Activated naive CD4-positive, alpha-beta T cell treated with anti-CD3 and anti-CD28 coated beads for 36 hours (primary cell): ENCODE measurements at regions of chr19 and their contacts with region 1.

Region 1: GRCh38 chr19:34171877-34172660 is at the start of gene LSM14A:
- DNase-seq: peak; percentile 90
- H3K4me3 Mint-ChIP-seq: peak within 1 kb of the TSS; percentile 96
- H3K27ac Mint-ChIP-seq: peak within 1 kb of the TSS; percentile 99
- H3K4me1 Mint-ChIP-seq: peaks cover 38% of the 10 kb centered on the region
- H3K27me3 Mint-ChIP-seq: no peaks in the 10 kb centered on the region
- total RNA-seq, gene LSM14A: 87.9 to 102 TPM

Region 2: GRCh38 chr19:34134190-34135053 is 37.6 kb before region 1 on chr19:
- CTCF ChIA-PET with region 1: interaction called, 4 read pairs
- intact Hi-C with region 1: loop called (anchors 1 kb)
- DNase-seq: peak; percentile 79
- H3K4me3 Mint-ChIP-seq: peak overlapping the region; percentile 94
- H3K27ac Mint-ChIP-seq: peak overlapping the region; percentile 93
- H3K4me1 Mint-ChIP-seq: peaks cover 5% of the 10 kb centered on the region
- H3K27me3 Mint-ChIP-seq: no peaks in the 10 kb centered on the region

Region 3: DNA sequence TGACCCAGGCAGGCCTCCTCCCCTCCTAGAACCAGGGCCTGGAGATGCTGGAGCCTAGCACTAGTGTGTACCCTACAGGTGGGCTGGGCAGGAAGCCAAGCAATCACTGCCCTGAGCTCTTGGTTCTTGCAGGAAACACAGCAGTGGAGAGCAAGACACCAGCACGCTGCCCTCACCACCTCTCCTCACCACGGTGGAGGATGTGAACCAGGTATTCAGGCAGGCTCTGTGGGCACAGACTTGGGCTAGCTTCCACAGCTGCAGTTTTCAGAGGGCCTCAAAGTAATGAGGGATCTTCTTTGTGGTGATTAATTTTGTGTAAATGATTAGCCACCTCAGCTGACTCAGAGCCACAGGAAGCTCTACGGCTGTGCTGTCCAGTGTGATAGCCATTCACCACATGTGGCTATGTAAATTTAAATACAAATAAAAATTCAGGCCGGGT is 179.3 kb after region 1 on chr19:
- CTCF ChIA-PET with region 1: interaction called, 3 read pairs
- intact Hi-C with region 1: loop called (anchors 1 kb)
- DNase-seq: no peak
- H3K4me3 Mint-ChIP-seq: no peak overlapping the region
- H3K27ac Mint-ChIP-seq: peak overlapping the region; percentile 81
- H3K4me1 Mint-ChIP-seq: peaks cover 18% of the 10 kb centered on the region
- H3K27me3 Mint-ChIP-seq: no peaks in the 10 kb centered on the region

Region 4: GRCh38 chr19:34359140-34359953 is 187.3 kb after region 1 on chr19:
- CTCF ChIA-PET with region 1: no interaction called
- intact Hi-C with region 1: loop called (anchors 1 kb)
- DNase-seq: peak; percentile 96
- H3K4me3 Mint-ChIP-seq: peak overlapping the region; percentile 80
- H3K27ac Mint-ChIP-seq: peak overlapping the region; percentile 93
- H3K4me1 Mint-ChIP-seq: peaks cover 35% of the 10 kb centered on the region
- H3K27me3 Mint-ChIP-seq: no peaks in the 10 kb centered on the region

Region 5: DNA sequence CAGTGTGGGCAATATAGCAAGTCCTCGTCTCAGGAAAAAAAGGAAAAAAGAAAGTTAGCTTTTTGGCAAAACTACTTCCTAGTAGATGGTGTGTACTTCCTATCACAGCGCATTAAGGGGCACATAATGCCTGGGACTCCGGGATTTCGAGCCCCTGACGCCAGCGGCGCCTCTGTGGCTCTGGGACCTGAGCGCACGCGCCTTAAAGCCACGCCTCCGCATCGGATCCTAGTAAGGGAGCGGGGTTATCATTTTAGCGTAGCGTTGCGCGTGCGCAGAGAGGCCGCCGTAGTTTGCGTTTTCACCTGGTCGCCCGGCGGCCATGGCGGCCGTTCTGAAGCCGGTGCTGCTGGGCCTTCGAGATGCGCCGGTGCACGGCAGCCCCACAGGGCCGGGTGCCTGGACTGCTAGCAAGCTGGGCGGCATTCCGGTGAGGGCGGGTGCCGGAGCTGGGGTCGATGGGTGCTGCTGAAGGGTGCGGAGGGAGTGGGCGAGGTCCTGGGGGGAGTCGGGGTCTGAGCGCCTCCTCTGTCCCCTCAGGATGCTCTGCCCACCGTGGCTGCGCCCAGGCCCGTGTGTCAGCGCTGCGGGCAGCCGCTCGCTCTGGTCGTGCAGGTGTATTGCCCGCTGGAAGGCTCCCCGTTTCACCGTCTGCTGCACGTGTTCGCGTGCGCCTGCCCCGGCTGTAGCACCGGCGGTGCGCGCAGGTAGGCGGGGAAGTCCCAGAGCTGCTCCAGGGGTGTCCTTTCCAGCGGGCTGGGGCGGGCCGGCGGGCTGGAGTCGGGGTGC is 232.2 kb after region 1 on chr19 and contains the start of gene PDCD2L:
- CTCF ChIA-PET with region 1: no interaction called
- intact Hi-C with region 1: loop called (anchors 1 kb)
- DNase-seq: peak; percentile 96
- H3K4me3 Mint-ChIP-seq: peak within 1 kb of the TSS; percentile 87
- H3K27ac Mint-ChIP-seq: peak within 1 kb of the TSS; percentile 71
- H3K4me1 Mint-ChIP-seq: peaks cover 24% of the 10 kb centered on the region
- H3K27me3 Mint-ChIP-seq: no peaks in the 10 kb centered on the region
- total RNA-seq, gene PDCD2L: 24.8 to 34.1 TPM

Region 6: DNA sequence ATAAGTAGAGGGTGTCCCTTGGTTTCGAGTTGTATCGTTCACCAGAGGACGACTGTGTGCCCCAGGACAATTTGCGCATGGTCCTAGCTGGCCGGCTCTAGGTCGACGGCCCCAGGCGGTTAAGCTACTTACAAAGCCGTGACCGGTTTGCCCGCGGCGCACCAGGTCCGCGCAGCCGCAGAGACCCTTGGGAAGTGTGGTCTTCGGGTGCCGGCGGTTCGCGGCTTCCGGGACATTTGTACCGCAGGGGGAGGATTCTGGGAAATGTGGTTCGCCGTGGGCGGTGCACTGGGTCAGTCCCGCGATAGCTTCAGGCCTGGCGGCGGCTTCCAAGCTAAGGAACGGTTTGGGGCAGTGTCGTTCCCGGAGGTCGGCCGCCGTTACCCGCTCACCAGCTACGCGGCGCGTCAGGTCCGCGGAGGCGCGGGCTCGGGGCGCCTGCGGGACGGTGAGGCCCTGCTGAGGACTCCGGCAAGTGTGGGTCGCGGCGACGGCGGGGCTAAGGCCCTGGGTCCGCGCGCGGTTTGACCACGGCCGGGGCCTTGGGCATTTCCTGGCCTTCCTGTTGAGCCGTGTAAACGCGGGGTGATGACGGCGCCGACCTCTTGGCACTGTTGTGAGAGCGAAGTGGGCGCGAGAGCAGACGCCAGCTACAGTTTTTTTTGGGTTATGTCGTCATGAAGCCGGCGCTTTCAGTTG is 505.5 kb after region 1 on chr19 and contains the start of gene ZNF302:
- CTCF ChIA-PET with region 1: interaction called, 3 read pairs
- intact Hi-C with region 1: loop called (anchors 5 kb)
- DNase-seq: peak; percentile 98
- H3K4me3 Mint-ChIP-seq: peak within 1 kb of the TSS; percentile 97
- H3K27ac Mint-ChIP-seq: peak within 1 kb of the TSS; percentile 99
- H3K4me1 Mint-ChIP-seq: peaks cover 26% of the 10 kb centered on the region
- H3K27me3 Mint-ChIP-seq: no peaks in the 10 kb centered on the region
- total RNA-seq, gene ZNF302: 13.1 to 13.6 TPM